Head of caudate nucleus (tissue), 42 donors: ENCODE measurements at regions of chr3 and their contacts with region 1.

Region 1: DNA sequence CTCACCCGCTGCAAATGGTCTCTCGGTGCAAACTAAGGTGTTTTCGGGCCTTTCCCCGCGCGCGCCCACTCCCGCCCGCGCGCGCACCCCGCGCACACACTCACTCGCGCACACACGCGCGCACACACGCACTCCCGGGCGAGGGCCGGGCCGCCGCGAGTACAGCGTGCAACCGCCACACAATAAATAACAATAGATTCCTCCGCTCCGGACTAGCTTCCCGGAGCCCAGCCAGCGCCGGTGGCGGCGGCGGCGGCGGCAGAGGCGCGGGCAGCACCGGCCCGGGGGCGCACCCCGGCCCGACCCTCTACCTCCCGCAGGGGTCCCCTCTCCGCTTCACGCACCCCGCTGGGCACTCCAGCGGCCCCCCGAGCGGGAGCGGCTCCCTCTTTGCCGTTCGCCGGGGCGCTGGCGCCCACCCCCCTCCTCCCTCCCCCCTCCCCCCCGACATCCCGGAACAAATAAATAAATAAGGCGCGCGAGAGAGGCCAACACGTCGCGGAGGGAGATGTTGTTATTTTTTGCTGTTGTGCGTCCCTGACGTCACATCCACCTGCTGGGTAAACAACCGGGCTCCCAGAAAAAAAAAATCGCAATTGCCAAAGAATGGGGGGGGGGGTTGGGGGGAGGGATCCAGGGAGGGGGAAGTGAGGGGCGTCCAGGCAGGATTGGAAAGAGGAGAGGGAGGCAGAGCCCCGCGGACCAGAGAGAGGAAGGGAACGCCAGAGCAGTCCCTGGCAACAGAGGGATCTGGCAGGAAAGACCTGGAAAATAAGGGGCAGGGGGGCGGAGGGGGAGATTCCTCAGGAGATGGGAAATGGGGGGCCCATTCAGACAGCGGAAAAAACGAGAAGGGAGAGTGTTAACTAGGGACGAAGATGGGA is at the start of gene FOXP1:
- DNase-seq: peak; percentile 61 to 89 (median 76)

Region 2: DNA sequence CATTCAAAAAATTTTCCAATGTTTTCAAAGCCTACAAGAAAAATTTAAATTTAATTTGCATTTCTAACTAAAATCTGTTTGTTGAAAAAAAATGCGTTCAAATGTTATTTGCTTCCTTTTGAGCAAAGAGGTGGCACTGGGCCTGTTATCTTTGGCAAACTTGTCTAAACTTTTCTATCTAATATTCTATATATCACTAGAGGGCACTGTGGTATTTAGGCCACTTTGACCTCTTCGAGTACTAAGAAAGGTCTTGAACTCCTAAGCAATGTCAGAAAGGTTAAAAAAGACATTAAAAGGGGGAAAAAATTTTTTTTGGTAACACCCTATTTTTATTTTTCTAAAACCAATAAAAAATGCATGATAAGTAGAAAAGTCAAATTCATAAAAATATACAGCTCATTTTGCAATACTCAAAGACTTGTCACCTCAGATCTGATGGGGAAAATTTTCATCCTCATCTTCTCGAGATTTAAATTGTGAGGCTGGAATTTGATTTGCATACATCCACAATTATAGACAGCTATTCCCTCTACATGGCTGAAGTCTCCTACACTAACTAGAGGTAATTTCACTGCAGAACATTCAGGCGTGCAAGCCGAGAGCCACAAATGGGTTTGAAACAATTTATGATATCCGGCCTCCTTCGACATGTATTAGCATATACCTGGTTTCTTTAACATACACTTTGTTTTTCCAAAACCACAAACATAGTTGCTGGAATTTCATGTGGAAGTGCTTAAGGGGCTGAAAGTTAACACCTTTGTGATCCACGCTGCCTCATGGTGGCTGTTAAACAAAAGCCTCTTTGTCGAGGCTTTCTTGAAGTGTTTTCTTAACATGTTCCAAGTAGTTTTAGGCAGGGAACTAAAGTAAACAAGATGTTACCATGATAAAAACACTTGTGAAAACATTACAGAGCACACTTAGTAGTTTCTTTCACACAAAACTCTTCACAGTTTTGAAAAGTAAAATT is 576.7 kb before region 1 on chr3:
- intact Hi-C with region 1: loop called (anchors 10 kb)
- DNase-seq: peak in 2 of 42 donors; percentile 27 to 35

Region 3: GRCh38 chr3:71069797-71070196 is 514.0 kb before region 1 on chr3:
- intact Hi-C with region 1: loop called (anchors 5 kb)
- DNase-seq: peak; percentile 49 to 91 (median 74)

Region 4: GRCh38 chr3:71305231-71306206 is 278.3 kb before region 1 on chr3:
- intact Hi-C with region 1: loop called (anchors 5 kb)
- DNase-seq: peak in 39 of 42 donors; percentile 5 to 74 (median 40)

Region 5: GRCh38 chr3:71389911-71390573 is 193.8 kb before region 1 on chr3:
- intact Hi-C with region 1: no loop called
- DNase-seq: peak in 31 of 42 donors; percentile 10 to 68 (median 35)

Region 6: DNA sequence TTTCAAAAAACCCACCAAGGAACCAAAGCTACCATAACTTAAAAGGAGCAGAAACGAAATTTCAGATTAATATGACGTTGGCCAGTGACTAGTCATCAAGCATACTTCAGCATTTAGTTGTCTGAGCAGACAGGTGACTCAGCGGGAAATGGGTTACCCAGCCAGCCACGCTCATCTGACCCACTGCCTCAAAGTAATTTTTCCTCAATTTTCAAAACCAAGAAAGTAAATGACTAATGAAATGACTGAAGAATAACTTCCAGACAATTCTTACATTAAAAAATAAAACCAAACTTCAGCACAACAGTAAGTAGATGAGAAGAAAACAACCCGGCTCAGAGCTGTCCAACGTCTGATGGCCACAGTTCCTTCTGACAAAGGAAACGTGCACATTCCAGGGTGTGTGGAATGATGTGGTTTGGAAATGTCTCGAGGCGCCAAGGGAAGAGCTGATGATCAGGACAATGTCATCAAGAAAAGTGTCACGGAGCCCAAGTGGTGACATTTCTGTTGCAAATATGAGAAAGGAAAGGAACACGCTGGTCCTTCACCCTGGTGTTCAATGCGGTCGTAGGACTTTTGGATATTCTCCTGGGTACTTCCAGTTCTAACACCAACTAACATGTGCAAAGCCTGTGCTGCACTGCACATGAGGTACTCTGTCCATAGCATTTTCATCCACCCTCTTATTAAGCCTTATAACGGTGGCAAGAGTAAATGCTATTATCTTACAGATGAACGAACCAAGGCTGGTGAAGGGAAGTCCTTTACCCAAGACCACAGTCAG is 79.4 kb before region 1 on chr3:
- intact Hi-C with region 1: loop called (anchors 5 kb)
- DNase-seq: no peak

Region 7: GRCh38 chr3:71652781-71653413 is 69.1 kb after region 1 on chr3:
- intact Hi-C with region 1: loop called (anchors 10 kb)
- DNase-seq: peak in 38 of 42 donors; percentile 7 to 74 (median 41)